Pancreas (tissue), 10 donors: ENCODE measurements at regions of chr11 and their contacts with region 1.

Region 1: DNA sequence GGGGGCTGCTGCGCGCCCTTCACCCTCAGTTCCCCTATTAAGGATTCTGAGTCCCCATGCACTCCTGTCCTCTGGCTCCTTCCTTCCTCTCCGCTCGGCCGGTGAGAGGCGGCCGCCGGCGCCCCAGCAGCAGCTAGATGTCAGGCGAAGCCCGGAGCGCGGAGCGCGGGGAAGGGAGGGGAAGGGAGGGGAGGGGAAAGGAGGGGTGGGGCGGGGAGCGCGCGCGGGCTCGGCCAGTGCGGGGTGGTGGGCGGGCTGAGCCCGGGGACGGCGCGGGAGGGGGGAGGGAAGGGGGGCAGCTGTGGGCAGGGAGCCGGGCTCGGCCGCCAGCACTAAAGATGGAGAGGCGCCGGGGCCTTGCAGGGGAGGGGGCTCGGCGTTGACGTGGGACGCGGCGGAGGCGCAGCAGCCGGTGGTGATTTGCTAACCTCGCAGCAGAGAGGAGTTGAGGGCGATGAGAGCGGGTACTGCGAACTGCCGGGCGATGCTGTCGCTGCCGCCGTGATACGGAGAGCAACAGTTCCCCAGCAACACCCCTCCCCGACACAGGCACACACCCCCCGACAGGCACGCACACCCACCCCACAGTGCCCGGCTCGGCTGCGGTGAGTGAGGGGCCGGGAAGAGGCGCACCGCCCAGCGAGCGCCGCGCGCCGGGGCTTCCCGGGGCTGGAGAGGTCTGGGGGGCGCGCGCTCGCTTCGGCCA is at the start of gene ZBTB16:
- DNase-seq: peak; percentile 87 to 97 (median 92)
- ATAC-seq: peak; percentile 68 to 81 (median 75)
- H3K4me3 ChIP-seq: peak within 1 kb of the TSS; percentile 79 to 98 (median 92)
- H3K27ac ChIP-seq: peak within 1 kb of the TSS; percentile 88 to 93 (median 90)
- H3K4me1 ChIP-seq: peaks cover 4 to 18% (median 17%) of the 10 kb centered on the region in 3 donors
- H3K27me3 ChIP-seq: no peaks in the 10 kb centered on the region
- CTCF ChIP-seq: peak in 1 of 4 donors; percentile 7
- total RNA-seq, gene ZBTB16: 8.1 to 76.4 (median 47.0) TPM

Region 2: DNA sequence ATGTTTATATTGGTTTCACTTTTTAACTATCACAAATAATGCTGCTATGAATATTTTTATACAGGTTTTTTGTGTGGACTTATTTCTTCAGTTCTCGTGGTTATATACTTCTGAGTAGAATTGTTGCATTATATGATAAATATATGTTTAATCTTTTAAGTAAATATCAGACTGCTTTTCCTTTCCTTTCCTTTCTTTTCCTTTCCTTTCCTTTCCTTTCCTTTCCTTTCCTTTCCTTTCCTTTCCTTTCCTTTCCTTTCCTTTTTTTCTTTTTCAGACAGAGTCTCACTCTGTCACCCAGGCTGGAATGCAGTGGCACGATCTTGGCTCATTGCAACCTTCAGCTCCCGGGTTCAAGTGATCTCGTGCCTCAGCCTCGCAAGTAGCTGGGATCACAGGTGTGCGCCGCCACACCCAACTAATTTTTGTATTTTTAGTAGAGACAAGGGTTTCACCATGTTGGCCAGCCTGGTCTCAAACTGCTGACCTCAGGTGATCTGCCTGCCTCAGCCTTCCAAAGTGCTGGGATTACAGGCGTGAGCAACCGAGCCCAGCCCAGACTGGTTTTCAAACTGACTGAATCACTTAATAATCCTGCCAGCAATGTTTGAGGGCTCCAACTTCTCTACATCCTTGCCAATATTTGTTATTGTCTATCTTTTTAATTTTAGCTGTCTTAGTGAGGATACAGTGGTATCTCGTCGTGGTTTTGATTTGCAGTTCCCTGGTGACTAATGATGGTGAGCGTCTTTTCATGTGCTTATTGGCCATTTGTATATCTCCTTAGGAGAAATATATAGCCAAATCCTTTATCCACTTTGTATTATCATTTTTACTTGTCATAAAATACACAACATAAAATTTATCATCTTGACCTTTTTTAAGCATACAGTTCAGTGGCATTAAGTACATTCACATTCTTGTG is 132.9 kb before region 1 on chr11:
- intact Hi-C with region 1: no loop called
- DNase-seq: no peak
- ATAC-seq: no peak
- H3K4me3 ChIP-seq: no peak overlapping the region
- H3K27ac ChIP-seq: no peak overlapping the region
- H3K4me1 ChIP-seq: no peaks in the 10 kb centered on the region
- H3K27me3 ChIP-seq: no peaks in the 10 kb centered on the region
- CTCF ChIP-seq: no peak

Region 3: DNA sequence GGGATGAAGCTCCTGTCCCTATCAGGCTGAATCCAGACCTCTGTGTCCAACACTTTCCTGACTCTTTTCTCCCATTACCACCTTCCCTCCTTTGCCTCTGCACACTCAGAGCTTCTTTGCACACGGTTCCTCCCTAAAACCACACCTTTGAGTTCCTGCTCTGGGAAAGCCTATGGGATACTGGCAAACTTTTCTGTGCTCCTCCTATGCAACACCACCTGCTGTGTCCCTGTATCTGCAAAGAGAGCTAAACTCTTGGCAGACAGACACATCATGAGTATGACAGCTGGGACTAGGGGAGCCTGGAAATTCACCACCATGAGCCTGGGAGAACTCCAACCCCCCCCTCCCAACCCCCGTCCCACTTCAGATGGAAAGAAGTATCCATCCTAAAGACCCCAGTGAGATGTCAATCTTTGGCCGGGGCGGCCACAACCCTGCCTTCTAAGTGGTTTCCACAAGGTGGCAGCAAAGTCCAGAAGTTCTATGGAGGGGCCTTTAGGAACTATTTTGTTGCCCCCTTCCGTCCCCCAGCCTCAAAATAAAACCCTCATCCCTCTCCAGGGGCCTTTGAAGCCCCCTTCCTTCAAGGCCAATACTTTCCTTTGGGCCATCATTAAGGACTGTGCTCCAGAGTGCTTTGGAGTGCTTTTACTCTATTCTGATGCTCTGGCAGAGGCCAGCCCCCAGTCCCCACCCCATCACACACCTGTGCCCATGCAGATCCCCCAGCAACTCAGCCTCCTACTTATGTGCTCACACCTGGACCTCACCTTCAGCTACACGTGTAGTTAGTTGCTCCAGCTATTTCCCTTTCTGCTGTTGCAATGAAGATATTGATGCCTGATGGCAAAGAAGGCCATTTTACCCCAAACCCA is 65.1 kb before region 1 on chr11:
- intact Hi-C with region 1: no loop called
- DNase-seq: peak in 1 of 6 donors; percentile 42
- ATAC-seq: peak; percentile 51 to 72 (median 64)
- H3K4me3 ChIP-seq: no peak overlapping the region
- H3K27ac ChIP-seq: no peak overlapping the region
- H3K4me1 ChIP-seq: no peaks in the 10 kb centered on the region
- H3K27me3 ChIP-seq: peaks cover 0 to 3% (median 1%) of the 10 kb centered on the region in 4 donors
- CTCF ChIP-seq: peak; percentile 41 to 64 (median 56)

Region 4: GRCh38 chr11:114121804-114122504 is 62.5 kb after region 1 on chr11:
- intact Hi-C with region 1: no loop called
- DNase-seq: no peak
- ATAC-seq: peak; percentile 30 to 66 (median 32)
- H3K4me3 ChIP-seq: no peak overlapping the region
- H3K27ac ChIP-seq: no peak overlapping the region
- H3K4me1 ChIP-seq: peaks cover 12% of the 10 kb centered on the region in 3 donors
- H3K27me3 ChIP-seq: no peaks in the 10 kb centered on the region
- CTCF ChIP-seq: no peak

Region 5: DNA sequence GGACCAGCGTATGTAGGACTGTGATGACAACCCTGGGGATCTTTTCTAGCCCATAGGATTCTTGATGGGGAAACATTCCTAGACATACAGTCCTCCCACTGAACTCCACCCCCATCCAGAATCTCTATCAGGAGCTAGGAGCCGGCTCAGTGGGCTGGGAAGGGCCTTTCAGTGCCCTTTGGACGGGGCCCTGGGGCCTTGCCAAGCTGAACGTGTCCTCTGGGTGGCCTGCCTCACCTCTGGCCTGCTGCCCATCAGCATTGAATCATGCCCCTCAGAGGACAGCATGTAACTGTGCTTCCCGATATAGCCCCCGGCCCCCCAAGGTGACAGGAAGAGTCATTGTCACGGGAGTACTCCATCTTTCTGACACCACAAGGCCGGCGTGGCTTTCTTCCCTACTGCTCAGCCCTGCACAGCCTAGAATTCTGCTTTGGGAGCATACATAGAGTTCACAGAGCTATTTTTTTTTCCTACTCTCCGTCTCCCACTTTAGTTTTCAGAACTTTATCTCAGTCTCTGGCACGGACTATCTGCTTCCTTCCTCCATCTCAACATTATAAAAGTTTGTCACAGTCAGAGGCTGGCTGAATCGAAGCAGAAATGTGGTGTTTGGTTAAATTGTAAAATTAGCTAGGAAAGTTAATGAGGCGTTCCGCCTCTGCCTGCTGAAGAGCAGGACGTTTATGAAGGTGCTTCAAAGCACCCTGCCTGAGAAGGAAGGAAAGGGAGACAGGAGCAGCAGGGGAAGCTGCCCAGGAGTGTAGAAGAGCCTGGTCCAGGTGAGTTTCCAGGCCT is 112.0 kb after region 1 on chr11:
- intact Hi-C with region 1: loop called in 1 of 3 experiments (anchors 5 kb)
- DNase-seq: peak; percentile 77 to 96 (median 88)
- ATAC-seq: peak; percentile 52 to 66 (median 60)
- H3K4me3 ChIP-seq: no peak overlapping the region
- H3K27ac ChIP-seq: peak overlapping the region; percentile 55 to 81 (median 76)
- H3K4me1 ChIP-seq: peaks cover 82 to 91% (median 90%) of the 10 kb centered on the region in 3 donors
- H3K27me3 ChIP-seq: no peaks in the 10 kb centered on the region
- CTCF ChIP-seq: no peak

Region 6: DNA sequence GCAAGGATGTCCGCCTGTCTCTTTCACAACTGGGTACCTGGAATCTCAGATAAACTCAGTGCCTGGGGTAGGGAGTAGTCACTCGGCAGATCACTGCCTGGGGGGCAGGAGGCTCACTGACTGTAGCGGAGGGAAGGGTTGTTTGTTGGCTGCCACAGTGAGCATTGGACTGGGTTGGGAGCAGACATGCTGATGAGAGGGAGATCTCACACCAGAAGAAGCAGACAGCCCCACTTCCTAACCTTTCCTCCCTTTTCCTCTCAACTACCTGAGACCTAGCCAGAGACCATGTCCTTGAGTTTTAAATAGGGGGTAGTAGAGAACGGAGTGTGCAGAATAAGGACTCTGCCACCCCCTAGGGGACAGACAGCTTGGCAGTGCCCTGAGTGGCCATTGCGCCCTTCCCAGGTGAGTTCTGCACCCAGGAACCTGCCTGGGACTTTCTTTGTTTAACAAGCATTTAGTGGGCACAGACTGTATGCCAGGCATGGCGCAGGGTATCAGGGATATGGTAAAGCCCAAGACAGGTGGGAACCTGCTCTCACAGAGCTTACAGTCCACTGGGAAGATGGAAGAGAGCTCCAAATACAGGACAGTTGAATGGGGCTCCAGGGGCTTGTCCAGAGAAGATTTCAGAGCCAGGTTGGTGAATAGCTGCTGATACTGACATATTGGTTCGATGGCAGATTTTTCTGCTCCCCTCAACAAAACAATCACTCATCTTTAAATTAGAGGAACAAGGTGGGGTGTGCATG is 121.0 kb after region 1 on chr11:
- intact Hi-C with region 1: loop called in 1 of 3 experiments (anchors 5 kb)
- DNase-seq: peak in 4 of 6 donors; percentile 67 to 82 (median 74)
- ATAC-seq: peak; percentile 62 to 87 (median 76)
- H3K4me3 ChIP-seq: peak overlapping the region in 2 of 4 donors; percentile 5 to 10
- H3K27ac ChIP-seq: peak overlapping the region; percentile 81 to 88 (median 86)
- H3K4me1 ChIP-seq: peaks cover 50 to 54% (median 54%) of the 10 kb centered on the region in 3 donors
- H3K27me3 ChIP-seq: no peaks in the 10 kb centered on the region
- CTCF ChIP-seq: peak; percentile 41 to 72 (median 58)